SK-N-SH (cell line): ENCODE measurements at regions of chr4 and their contacts with region 1.

Region 1: DNA sequence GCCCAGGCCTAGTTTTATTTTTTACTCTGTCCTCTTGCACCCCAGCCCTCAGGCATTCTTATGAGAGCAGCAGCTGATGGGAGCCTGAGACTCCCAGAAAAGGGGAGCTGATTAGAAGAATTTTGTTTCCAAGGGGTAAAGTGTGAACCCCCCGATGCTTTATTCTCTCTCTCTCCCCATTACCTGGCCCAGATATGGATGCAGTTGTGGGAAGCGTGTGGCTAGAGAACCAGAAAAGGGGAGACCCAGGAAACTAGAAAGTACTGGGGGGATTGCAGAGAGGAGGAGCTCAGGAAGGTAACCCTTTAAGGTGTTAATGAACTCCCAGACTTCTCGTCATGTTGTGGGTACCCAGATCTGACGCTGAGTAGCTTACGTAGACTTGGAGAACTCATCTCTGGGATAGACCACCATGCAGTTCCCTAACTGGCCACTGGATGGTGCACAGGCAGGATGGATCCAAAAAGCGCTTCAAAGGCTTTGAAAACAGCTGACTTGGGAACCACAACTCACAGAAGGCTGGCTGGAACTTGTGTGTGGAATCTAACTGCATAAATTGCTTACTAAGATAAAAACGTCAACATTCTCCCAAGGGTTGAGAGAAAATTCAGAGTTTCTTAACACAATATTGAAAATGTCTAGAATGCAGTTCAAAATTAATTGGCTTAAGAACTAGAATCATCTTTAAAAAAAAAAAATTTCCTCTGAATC is 64.7 kb downstream of the TBC1D14 start:
- DNase-seq: peak; percentile 87
- H3K4me3 ChIP-seq: no peak overlapping the region
- H3K27ac ChIP-seq: no peak overlapping the region
- H3K4me1 ChIP-seq: no peaks in the 10 kb centered on the region; a peak in 1 of 4 replicates
- H3K27me3 ChIP-seq: no peaks in the 10 kb centered on the region
- CTCF ChIP-seq: peak; percentile 89
- EP300 ChIP-seq: no peak
- RAD21 ChIP-seq: peak; percentile 81

Region 2: GRCh38 chr4:6716018-6716911 is 258.0 kb before region 1 on chr4 and contains the start of gene BLOC1S4:
- CTCF ChIA-PET with region 1: interaction called, 14 read pairs
- POLR2A ChIA-PET with region 1: no interaction called
- DNase-seq: peak; percentile 97
- H3K4me3 ChIP-seq: peak within 1 kb of the TSS; percentile 81 to 83
- H3K27ac ChIP-seq: peak within 1 kb of the TSS; percentile 60 to 85
- H3K4me1 ChIP-seq: peaks cover 0 to 6% of the 10 kb centered on the region in 2 experiments; a peak in 2 of 4 replicates
- H3K27me3 ChIP-seq: no peaks in the 10 kb centered on the region
- CTCF ChIP-seq: no peak
- EP300 ChIP-seq: no peak
- RAD21 ChIP-seq: no peak
- polyA plus RNA-seq, gene BLOC1S4: 21.9 and 22.1 TPM in 2 replicates

Region 3: DNA sequence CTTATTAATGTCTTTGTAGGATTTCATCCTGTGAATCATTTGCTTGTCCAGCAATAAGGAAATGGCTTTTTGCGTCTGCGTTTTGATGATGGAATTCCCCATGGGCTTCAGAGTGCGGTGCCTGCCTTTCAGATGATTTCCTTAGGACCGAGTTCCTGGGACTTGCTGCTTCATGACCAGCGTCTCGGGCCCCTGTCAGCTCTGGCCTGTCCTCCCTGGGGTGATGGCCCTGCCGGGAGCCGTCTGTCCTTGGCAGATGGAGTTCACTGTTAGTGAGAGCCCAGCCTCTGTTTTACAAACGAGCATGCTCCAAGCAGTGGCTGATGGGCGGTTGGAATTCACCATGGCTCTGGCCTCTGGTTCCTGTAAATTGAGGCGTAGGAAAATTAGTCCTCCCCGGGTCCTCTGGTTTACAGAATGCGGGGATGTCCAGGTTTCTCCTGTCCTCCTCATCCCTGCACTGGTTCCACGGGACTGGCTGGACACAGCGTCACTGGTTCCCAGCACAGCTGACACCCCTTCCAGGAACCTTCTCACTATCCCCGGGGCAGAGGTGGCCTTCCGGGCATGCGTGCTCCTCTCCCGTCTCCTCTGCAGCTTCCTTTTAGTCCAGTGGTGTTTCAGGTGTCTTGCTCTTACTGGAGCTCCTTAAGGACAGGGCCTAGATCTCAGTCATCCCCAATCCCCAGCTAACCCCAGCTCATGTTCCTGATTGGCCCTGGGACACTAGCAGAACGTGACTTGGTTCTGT is 29.8 kb before region 1 on chr4:
- CTCF ChIA-PET with region 1: interaction called, 24 read pairs
- POLR2A ChIA-PET with region 1: no interaction called
- DNase-seq: no peak
- H3K4me3 ChIP-seq: no peak overlapping the region
- H3K27ac ChIP-seq: no peak overlapping the region
- H3K4me1 ChIP-seq: peaks cover 17% of the 10 kb centered on the region in 2 experiments
- H3K27me3 ChIP-seq: no peaks in the 10 kb centered on the region
- CTCF ChIP-seq: no peak
- EP300 ChIP-seq: no peak
- RAD21 ChIP-seq: no peak

Region 4: GRCh38 chr4:6963139-6963611 is 11.1 kb before region 1 on chr4:
- CTCF ChIA-PET with region 1: interaction called, 32 read pairs
- POLR2A ChIA-PET with region 1: no interaction called
- DNase-seq: no peak
- H3K4me3 ChIP-seq: no peak overlapping the region
- H3K27ac ChIP-seq: no peak overlapping the region
- H3K4me1 ChIP-seq: peaks cover 0 to 2% of the 10 kb centered on the region in 2 experiments; a peak in 1 of 4 replicates
- H3K27me3 ChIP-seq: no peaks in the 10 kb centered on the region
- CTCF ChIP-seq: no peak
- EP300 ChIP-seq: no peak
- RAD21 ChIP-seq: no peak

Region 5: GRCh38 chr4:7042697-7043464 is 68.6 kb after region 1 on chr4 and contains the start of gene TADA2B:
- CTCF ChIA-PET with region 1: interaction called, 20 read pairs
- POLR2A ChIA-PET with region 1: no interaction called
- DNase-seq: peak; percentile 100
- H3K4me3 ChIP-seq: peak within 1 kb of the TSS; percentile 92 to 96
- H3K27ac ChIP-seq: peak within 1 kb of the TSS; percentile 83 to 88
- H3K4me1 ChIP-seq: peaks cover 15 to 29% of the 10 kb centered on the region in 2 experiments
- H3K27me3 ChIP-seq: no peaks in the 10 kb centered on the region
- CTCF ChIP-seq: peak; percentile 22
- EP300 ChIP-seq: 0 out of 4 replicates have a peak, but pooled peaks of 1 of the 2 experiments have one; percentile 11
- RAD21 ChIP-seq: no peak; the same call in 1 of the 2 replicates
- polyA plus RNA-seq, gene TADA2B: 6.0 and 8.0 TPM in 2 replicates

Region 6: GRCh38 chr4:7081891-7082471 is 107.7 kb after region 1 on chr4:
- CTCF ChIA-PET with region 1: interaction called, 18 read pairs
- POLR2A ChIA-PET with region 1: no interaction called
- DNase-seq: peak; percentile 65
- H3K4me3 ChIP-seq: no peak overlapping the region
- H3K27ac ChIP-seq: no peak overlapping the region
- H3K4me1 ChIP-seq: no peaks in the 10 kb centered on the region; a peak in 1 of 4 replicates
- H3K27me3 ChIP-seq: no peaks in the 10 kb centered on the region
- CTCF ChIP-seq: peak; percentile 46
- EP300 ChIP-seq: no peak
- RAD21 ChIP-seq: peak; percentile 66

Region 7: DNA sequence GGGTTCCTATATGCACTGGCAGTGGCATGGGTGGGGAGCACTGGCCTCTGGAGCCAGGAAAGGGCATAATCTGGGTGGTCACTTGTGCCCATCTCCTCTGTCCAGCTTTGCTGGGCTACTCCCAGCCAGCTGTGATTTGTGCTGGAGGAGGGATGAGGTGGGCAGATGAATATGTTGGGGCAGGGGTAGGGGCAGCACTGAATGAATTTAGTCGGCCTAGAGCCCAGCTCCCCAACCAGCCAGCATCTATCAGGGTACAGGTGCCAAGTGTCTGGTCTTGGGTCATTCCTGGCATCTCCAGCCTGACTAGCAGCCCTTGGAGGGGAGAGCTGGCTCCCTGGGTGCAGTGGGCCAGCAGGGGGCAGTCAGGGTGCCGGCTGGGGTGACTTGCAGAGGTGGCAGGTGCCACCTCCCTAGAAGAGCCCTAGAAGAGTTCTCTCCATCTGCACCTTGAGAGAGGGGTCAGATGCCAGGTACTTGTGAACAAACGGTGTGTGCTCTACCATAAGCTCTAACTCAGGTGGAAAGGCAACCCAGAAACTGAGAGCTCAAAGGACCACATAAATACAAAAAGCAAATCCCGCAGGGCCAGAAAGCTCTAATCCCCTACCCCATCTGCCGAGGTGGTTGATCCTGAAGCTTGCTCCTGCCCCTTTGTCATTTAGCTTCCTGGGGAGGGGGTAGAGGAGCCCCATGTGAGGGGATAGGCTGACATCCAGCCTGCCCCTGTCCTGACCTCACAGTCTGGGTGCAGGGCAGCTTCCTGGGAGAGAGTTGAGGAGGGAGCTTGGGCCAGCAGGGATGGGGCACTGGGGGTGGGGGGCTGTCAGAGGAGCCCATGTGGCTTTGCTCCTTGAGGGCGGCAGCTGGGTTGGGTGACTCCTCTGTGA is 220.2 kb after region 1 on chr4:
- CTCF ChIA-PET with region 1: no interaction called
- POLR2A ChIA-PET with region 1: no interaction called
- DNase-seq: peak; percentile 69
- H3K4me3 ChIP-seq: peak overlapping the region in 1 of 2 experiments; percentile 17; a peak in 1 of 4 replicates
- H3K27ac ChIP-seq: no peak overlapping the region
- H3K4me1 ChIP-seq: peaks cover 0 to 12% of the 10 kb centered on the region in 2 experiments; a peak in 1 of 4 replicates
- H3K27me3 ChIP-seq: peaks cover 34% of the 10 kb centered on the region
- CTCF ChIP-seq: peak; percentile 65
- EP300 ChIP-seq: no peak
- RAD21 ChIP-seq: peak; percentile 42